ENCODE measurements at regions of chr2 and their contacts with region 1.

Region 1: DNA sequence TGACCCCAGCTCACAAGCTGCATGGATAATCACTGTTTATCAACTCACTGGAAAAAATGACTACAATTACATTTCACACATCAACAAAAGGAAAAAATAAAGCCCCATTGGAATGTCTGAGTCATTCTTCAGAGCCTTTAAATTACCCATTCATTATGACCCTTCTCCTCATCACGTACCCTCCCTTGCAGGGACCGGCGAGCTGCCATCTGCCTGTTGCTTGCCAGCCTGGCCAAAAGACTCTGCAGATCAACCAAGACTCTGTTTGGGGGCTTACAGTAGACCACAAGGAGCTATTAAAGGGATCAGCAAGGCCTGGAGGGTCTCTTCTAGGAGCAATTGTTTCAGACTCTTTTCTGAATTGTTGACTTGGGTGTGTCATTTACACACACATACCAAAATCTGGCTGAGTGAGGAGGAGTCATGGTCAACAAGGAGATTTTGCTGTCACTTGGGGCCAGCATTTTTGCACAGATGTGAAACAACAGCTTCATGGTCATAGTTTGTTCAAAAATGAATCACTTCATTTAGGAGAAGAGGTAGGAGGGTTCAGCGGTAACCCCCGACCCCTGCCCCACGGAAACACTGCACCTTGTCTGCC is 42.0 kb downstream of the LBH start:
- DNase-seq: peak; percentile 73
- H3K4me3 ChIP-seq: no peak overlapping the region
- H3K27ac ChIP-seq: peak overlapping the region; percentile 15
- H3K4me1 ChIP-seq: peaks cover 21% of the 10 kb centered on the region
- H3K27me3 ChIP-seq: no peaks in the 10 kb centered on the region
- CTCF ChIP-seq: no peak
- POLR2A ChIP-seq: no peak

Region 2: GRCh38 chr2:30231212-30231995 is 42.0 kb before region 1 on chr2 and contains the start of gene LBH:
- CTCF ChIA-PET with region 1: no interaction called
- POLR2A ChIA-PET with region 1: no interaction called
- dilution Hi-C with region 1: no loop called
- intact Hi-C with region 1: loop called (anchors 5 kb)
- DNase-seq: peak; percentile 72
- H3K4me3 ChIP-seq: peak within 1 kb of the TSS; percentile 51 to 58 (median 53)
- H3K27ac ChIP-seq: no peak within 1 kb of the TSS
- H3K4me1 ChIP-seq: peaks cover 9% of the 10 kb centered on the region
- H3K27me3 ChIP-seq: peaks cover 21 to 22% of the 10 kb centered on the region in 2 experiments
- CTCF ChIP-seq: peak in 1 of 2 donors; percentile 3
- POLR2A ChIP-seq: peak; percentile 86
- total RNA-seq, gene LBH: 2.9 and 5.5 TPM in 2 replicates